Breast epithelium (tissue), 4 donors: ENCODE measurements at regions of chr6 and their contacts with region 1.

Region 1: DNA sequence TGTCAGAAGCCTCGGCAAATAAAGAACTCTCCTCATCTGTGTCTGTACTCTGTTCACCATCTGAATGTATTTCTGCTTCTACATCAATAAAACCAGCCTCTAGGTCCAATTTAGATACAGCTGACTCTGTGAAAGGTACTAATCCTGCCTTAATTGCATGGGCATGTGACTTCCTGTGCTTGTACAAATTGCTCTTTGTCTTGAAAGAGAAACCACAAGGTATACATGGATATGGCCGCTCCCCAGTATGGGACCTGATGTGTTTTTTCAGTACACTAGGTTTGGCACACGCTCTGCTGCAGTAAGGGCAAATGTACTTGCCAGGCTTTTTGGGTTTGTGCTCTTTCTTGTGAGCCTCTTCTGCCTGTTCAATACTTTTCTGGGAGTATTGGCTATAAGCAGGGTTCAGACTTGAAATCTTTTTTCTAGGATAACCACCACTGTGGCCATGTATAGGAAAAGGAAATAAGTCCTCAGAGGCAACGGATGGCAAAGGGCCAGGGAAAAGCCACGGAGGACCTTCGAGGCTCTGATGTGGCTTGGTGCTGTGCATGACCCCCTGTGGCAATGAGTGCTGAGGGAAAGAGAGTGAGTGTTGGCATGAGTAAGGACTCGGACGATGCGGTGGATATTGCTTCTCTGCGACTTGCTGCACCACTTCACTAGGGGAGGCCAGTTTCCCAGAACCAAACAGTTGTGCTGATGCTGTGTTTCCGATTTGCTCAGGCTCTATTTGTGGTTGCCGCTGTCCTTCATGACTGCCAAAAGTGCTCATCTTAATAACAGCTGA is 170.9 kb downstream of the HIVEP2 start:
- DNase-seq: no peak
- H3K4me3 ChIP-seq: no peak overlapping the region
- H3K27ac ChIP-seq: no peak overlapping the region
- H3K4me1 ChIP-seq: no peaks in the 10 kb centered on the region
- H3K27me3 ChIP-seq: no peaks in the 10 kb centered on the region
- CTCF ChIP-seq: no peak
- POLR2A ChIP-seq: no peak

Region 2: GRCh38 chr6:142790257-142790656 is 16.2 kb after region 1 on chr6:
- intact Hi-C with region 1: loop called (anchors 2 kb)
- DNase-seq: no peak
- H3K4me3 ChIP-seq: no peak overlapping the region
- H3K27ac ChIP-seq: no peak overlapping the region
- H3K4me1 ChIP-seq: no peaks in the 10 kb centered on the region
- H3K27me3 ChIP-seq: no peaks in the 10 kb centered on the region
- CTCF ChIP-seq: no peak
- POLR2A ChIP-seq: no peak